Endothelial cell of umbilical vein (primary cell): ENCODE measurements at regions of chr16 and their contacts with region 1.

Region 1: GRCh38 chr16:30984669-30985400 is at the start of gene HSD3B7:
- DNase-seq: peak; percentile 69
- H3K4me3 ChIP-seq: peak within 1 kb of the TSS in 1 of 3 experiments; percentile 19
- H3K27ac ChIP-seq: no peak within 1 kb of the TSS
- H3K4me1 ChIP-seq: no peaks in the 10 kb centered on the region
- H3K27me3 ChIP-seq: no peaks in the 10 kb centered on the region
- CTCF ChIP-seq: peak; percentile 93 to 97
- POLR2A ChIP-seq: no peak
- total RNA-seq, gene HSD3B7: 2.9 and 3.5 TPM in 2 replicates

Region 2: GRCh38 chr16:31073968-31074813 is 89.4 kb after region 1 on chr16 and contains the starts of genes ZNF646 and ZNF668:
- CTCF ChIA-PET with region 1: interaction called, 22 read pairs
- POLR2A ChIA-PET with region 1: no interaction called
- dilution Hi-C with region 1: no loop called
- intact Hi-C with region 1: loop called (anchors 1 kb)
- DNase-seq: peak; percentile 99
- H3K4me3 ChIP-seq: peak within 1 kb of the TSS; percentile 68 to 87 (median 87)
- H3K27ac ChIP-seq: peak within 1 kb of the TSS; percentile 86
- H3K4me1 ChIP-seq: peaks cover 14% of the 10 kb centered on the region
- H3K27me3 ChIP-seq: no peaks in the 10 kb centered on the region
- CTCF ChIP-seq: no peak
- POLR2A ChIP-seq: peak; percentile 84
- total RNA-seq, gene ZNF646: 13.1 and 15.9 TPM in 2 replicates
- total RNA-seq, gene ZNF668: 11.6 and 13.3 TPM in 2 replicates

Region 3: DNA sequence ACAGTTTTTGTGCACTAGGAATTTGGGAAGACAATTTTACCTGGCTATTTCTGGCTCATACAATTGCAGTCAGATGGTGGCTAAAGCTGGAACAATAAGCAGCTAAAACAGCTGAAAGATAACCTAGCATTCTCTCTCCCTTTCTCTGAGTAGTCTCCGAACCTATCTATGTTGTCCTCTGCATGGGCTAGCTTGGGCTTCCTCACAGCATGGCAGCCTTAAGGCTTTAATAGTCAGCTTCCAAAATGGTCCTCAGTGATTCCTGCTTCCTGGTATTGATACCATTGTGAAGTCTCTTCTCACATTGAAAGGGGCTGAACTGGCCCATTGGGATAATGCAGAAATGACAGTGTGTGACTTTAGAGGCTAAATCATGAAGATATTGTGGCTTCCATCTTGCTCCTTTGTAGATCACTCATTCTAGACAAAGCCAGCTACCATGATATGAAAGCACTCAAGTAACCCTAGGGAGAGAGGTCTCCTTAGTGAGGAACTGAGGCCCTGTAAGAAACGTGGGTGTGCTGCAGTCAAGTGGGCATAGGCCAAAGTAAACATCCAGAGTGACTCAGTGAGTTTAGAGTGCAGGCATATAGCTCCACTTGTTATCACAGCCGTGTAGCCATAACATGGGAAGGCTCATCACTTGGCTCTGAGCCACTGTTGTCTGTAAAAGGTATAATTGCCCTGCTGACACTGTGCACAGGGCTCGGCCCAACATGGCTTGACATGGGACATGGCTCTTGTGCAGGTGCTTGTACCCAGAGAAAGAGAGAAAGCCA is 115.2 kb after region 1 on chr16:
- CTCF ChIA-PET with region 1: interaction called, 66 read pairs
- POLR2A ChIA-PET with region 1: no interaction called
- dilution Hi-C with region 1: no loop called
- intact Hi-C with region 1: loop called (anchors 1 kb)
- DNase-seq: peak; percentile 18
- H3K4me3 ChIP-seq: no peak overlapping the region
- H3K27ac ChIP-seq: no peak overlapping the region
- H3K4me1 ChIP-seq: no peaks in the 10 kb centered on the region
- H3K27me3 ChIP-seq: no peaks in the 10 kb centered on the region
- CTCF ChIP-seq: no peak
- POLR2A ChIP-seq: no peak

Region 4: GRCh38 chr16:31157136-31157535 is 172.3 kb after region 1 on chr16:
- CTCF ChIA-PET with region 1: no interaction called
- POLR2A ChIA-PET with region 1: no interaction called
- dilution Hi-C with region 1: no loop called
- intact Hi-C with region 1: loop called (anchors 1 kb)
- DNase-seq: no peak
- H3K4me3 ChIP-seq: no peak overlapping the region
- H3K27ac ChIP-seq: no peak overlapping the region
- H3K4me1 ChIP-seq: no peaks in the 10 kb centered on the region
- H3K27me3 ChIP-seq: no peaks in the 10 kb centered on the region
- CTCF ChIP-seq: no peak
- POLR2A ChIP-seq: no peak

Region 5: DNA sequence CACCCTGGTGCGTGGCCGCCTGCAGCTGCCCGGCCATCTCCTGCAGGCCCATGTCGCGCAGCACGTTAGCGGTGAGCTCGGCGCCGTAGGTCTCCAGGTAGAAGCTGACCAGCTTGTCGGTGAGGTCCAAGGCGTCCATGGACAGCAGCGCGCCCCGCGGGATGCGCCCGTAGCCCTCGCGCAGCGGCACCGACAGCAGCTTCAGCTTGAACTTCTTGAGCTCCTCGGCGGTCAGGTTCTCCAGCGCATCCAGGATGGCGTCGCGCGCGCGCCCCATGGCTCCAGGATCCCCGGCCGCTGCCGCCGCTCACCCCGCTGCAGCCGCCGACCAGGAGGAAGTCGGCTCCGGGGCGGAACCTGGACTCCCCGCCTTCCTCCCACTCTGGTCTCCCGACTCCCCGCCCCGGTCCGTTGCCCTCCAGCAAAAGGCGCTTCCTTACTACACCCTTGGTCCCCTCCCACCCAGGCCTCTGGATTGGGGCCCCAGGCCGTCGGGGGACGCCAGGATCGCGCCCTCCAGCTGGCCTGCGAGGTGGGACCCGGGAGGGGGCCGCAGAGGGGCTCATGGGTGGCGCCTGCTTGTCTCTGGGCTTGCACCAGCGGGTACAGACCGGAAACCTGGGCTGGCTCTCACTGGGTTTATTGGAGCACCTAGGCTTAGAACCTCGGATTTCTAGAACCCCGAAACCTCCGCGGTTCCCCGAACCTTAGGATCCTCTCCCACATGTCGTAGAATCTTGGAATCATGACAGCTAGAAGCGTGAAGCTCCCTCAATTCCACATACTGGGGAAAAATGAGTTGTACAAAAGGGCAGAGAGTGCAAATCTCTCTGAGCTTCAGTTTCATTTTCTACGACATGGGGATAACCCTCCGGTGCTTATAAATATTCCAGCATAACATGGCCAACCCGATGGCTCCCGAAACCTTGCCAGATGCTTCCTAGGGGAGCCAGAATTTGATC is 217.9 kb after region 1 on chr16 and contains the start of gene PYCARD:
- CTCF ChIA-PET with region 1: no interaction called
- POLR2A ChIA-PET with region 1: no interaction called
- dilution Hi-C with region 1: no loop called
- intact Hi-C with region 1: no loop called
- DNase-seq: peak; percentile 36
- H3K4me3 ChIP-seq: peak within 1 kb of the TSS; percentile 26 to 62 (median 36)
- H3K27ac ChIP-seq: no peak within 1 kb of the TSS
- H3K4me1 ChIP-seq: peaks cover 4% of the 10 kb centered on the region
- H3K27me3 ChIP-seq: peaks cover 2 to 6% of the 10 kb centered on the region in 2 experiments
- CTCF ChIP-seq: no peak
- POLR2A ChIP-seq: no peak
- total RNA-seq, gene PYCARD: 19.1 and 23.0 TPM in 2 replicates

Region 6: GRCh38 chr16:31440516-31441184 is 455.8 kb after region 1 on chr16:
- CTCF ChIA-PET with region 1: interaction called, 48 read pairs
- POLR2A ChIA-PET with region 1: interaction called, 4 read pairs
- dilution Hi-C with region 1: no loop called
- intact Hi-C with region 1: loop called (anchors 1 kb)
- DNase-seq: no peak
- H3K4me3 ChIP-seq: no peak overlapping the region
- H3K27ac ChIP-seq: no peak overlapping the region
- H3K4me1 ChIP-seq: no peaks in the 10 kb centered on the region
- H3K27me3 ChIP-seq: peaks cover 3 to 11% of the 10 kb centered on the region in 2 experiments
- CTCF ChIP-seq: no peak
- POLR2A ChIP-seq: no peak